Gastrocnemius medialis (tissue), 4 donors: ENCODE measurements at regions of chr10 and their contacts with region 1.

Region 1: DNA sequence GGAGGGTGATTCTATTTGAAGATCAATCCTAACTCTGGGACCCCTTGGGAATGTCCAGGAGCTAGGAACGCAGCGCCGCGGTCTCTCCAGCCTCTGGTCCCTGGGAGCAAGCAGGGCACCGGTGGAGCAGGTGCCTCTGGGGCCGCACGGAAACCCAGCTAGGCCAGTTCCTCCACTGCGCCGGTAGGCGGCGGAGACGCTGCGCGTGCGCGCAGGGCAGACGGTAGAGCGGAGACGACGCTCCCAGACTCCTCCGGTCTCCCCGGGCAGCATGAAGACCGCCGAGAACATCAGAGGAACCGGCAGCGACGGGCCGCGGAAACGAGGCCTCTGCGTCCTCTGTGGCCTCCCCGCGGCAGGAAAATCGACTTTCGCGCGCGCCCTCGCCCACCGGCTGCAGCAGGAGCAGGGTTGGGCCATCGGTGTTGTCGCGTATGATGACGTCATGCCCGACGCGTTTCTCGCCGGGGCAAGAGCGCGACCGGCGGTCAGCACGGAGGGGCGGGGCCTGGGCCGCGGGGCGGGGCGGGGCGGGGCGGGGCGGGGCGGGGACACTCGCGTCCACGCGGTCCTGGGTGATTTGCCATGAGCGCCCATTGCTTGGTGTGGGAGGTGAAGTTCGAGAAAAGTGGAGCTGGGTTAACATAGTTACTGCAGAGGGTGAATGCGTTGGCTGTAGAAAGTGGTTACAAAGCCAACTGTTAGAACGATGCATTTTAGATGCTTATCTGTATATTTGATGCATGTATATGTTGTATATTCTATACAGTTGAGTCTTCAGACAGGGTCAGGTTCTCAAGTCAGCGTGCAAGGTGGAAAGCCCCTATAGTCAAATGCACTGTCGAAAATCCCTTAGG is at the start of gene PSTK:
- DNase-seq: peak; percentile 80 to 84
- ATAC-seq: peak; percentile 97 to 98
- H3K4me3 ChIP-seq: peak within 1 kb of the TSS; percentile 72 to 88 (median 78)
- H3K27ac ChIP-seq: peak within 1 kb of the TSS; percentile 85 to 96 (median 90)
- H3K4me1 ChIP-seq: peaks cover 11 to 12% of the 10 kb centered on the region in 2 donors
- H3K27me3 ChIP-seq: no peaks in the 10 kb centered on the region
- CTCF ChIP-seq: peak; percentile 97 to 98 (median 98)
- POLR2A ChIP-seq: peak in 1 of 2 donors; percentile 45
- total RNA-seq, gene PSTK: 2.2 to 7.0 (median 4.4) TPM

Region 2: DNA sequence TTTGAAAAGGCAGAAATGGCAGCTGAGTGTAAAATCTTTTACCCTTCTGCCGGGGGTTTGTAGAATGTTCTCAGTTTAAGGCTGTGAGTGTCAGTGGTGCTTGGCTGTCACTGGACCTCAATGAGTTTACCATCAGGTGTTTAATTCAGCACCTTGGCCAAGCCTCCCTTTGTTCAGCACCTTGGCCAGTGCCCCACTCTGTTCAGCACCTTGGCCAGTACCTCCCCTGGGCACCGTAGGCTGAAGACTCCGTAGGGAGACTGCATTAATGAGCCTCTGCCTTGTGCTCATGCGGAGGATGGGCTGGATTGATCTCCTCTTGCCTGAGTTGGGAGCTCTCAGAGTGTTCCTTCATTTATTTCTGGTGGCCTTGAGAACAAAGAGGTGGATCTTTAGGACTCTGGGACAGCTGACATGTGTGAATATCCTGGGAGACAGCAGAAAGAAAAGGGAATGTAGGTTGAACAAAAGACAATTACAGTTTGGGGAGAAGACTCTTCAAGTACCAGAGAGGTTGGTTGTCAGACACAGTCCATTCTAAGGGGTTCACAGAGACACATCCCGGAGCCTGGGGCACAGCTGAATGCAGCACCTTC is 68.5 kb before region 1 on chr10:
- in situ Hi-C with region 1: no loop called
- intact Hi-C with region 1: no loop called
- DNase-seq: no peak
- ATAC-seq: no peak
- H3K4me3 ChIP-seq: no peak overlapping the region
- H3K27ac ChIP-seq: no peak overlapping the region
- H3K4me1 ChIP-seq: no peaks in the 10 kb centered on the region
- H3K27me3 ChIP-seq: no peaks in the 10 kb centered on the region
- CTCF ChIP-seq: no peak
- POLR2A ChIP-seq: no peak

Region 3: GRCh38 chr10:122953827-122954730 is 26.4 kb before region 1 on chr10 and contains the start of gene C10orf88:
- in situ Hi-C with region 1: no loop called
- intact Hi-C with region 1: loop called (anchors 1 kb)
- DNase-seq: peak; percentile 95 to 98
- ATAC-seq: peak; percentile 99
- H3K4me3 ChIP-seq: peak within 1 kb of the TSS; percentile 83 to 92 (median 88)
- H3K27ac ChIP-seq: peak within 1 kb of the TSS; percentile 75 to 86 (median 81)
- H3K4me1 ChIP-seq: peaks cover 10 to 22% of the 10 kb centered on the region in 2 donors
- H3K27me3 ChIP-seq: no peaks in the 10 kb centered on the region
- CTCF ChIP-seq: no peak
- POLR2A ChIP-seq: no peak
- total RNA-seq, gene C10orf88: 4.2 to 9.6 (median 6.8) TPM

Region 4: DNA sequence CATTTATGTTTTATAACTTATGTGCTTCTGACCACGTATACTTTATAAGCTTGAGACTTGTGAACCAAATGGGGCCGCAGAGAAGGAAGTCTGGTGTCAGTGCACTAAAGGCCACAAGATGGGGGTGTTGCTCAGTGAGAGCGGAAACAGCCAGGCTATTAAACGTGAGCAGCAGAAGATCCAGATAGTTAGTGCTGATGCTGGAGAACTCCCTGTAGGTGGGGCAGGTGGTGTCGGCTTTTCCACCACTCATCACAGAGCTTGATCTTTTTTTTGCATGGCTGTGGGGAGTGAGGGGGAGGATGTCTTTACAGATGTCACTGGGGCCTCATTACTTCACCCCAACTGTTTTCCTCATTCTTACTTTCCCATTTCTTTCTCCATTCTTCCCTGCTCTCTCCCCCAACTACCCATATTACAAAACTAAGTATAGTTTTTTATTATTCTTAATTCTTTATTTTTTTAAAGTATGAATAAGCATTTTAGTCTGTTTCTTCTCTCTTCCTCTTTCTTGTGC is 63.0 kb after region 1 on chr10:
- in situ Hi-C with region 1: no loop called
- intact Hi-C with region 1: no loop called
- DNase-seq: no peak
- ATAC-seq: no peak
- H3K4me3 ChIP-seq: no peak overlapping the region
- H3K27ac ChIP-seq: no peak overlapping the region
- H3K4me1 ChIP-seq: peaks cover 0 to 3% of the 10 kb centered on the region in 2 donors
- H3K27me3 ChIP-seq: no peaks in the 10 kb centered on the region
- CTCF ChIP-seq: peak in 1 of 5 experiments; percentile 31
- POLR2A ChIP-seq: no peak

Region 5: DNA sequence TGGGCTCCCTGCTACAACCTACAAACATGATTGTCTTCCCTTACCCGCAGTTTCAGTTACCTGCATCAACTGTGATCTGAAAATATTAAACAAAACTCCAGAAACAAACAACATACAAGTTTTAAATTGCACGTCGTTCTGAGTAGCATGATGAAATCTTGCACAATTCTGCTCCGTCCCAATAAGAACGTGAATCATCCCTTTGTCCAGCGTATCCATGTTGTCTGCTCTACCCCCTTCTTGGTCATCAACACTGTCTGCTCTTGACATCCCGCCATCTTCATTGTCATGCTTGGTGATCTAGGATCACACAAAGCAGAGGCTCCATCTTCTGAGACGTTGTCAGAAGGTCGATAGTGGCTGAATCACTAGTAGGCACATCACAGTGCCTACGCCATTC is 82.3 kb after region 1 on chr10:
- in situ Hi-C with region 1: no loop called
- intact Hi-C with region 1: no loop called
- DNase-seq: no peak
- ATAC-seq: no peak
- H3K4me3 ChIP-seq: no peak overlapping the region
- H3K27ac ChIP-seq: no peak overlapping the region
- H3K4me1 ChIP-seq: no peaks in the 10 kb centered on the region
- H3K27me3 ChIP-seq: peaks cover 0 to 8% (median 4%) of the 10 kb centered on the region in 3 donors
- CTCF ChIP-seq: no peak
- POLR2A ChIP-seq: no peak